Transverse colon (tissue), 4 donors: ENCODE measurements at regions of chr9 and their contacts with region 1.

Region 1: GRCh38 chr9:12719431-12719830 is 26.2 kb downstream of the TYRP1 start:
- DNase-seq: no peak
- H3K4me3 ChIP-seq: no peak overlapping the region
- H3K27ac ChIP-seq: no peak overlapping the region
- H3K4me1 ChIP-seq: no peaks in the 10 kb centered on the region
- H3K27me3 ChIP-seq: no peaks in the 10 kb centered on the region
- CTCF ChIP-seq: peak; percentile 42 to 57 (median 51)
- EP300 ChIP-seq: no peak
- POLR2A ChIP-seq: no peak

Region 2: DNA sequence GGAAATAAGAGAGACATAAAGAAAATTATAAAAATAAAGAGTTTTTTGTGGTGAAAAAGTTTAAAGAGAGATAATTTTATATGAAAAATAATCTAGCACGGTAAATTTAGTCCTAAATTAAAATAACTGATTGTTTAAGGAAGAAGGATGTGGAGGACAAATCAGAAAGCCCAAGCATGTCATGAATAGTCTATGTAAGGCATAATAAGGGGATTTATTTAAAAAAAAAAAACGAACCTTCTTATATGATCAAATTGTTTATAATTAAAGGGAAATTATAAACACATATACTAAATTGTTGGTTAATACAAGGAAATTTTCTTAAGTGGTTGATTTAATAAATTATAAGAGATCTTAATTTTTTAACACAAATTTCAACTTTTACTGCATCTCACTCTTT is 578.0 kb before region 1 on chr9:
- in situ Hi-C with region 1: no loop called
- intact Hi-C with region 1: no loop called
- DNase-seq: no peak
- H3K4me3 ChIP-seq: no peak overlapping the region
- H3K27ac ChIP-seq: no peak overlapping the region
- H3K4me1 ChIP-seq: no peaks in the 10 kb centered on the region
- H3K27me3 ChIP-seq: no peaks in the 10 kb centered on the region
- CTCF ChIP-seq: no peak
- EP300 ChIP-seq: no peak
- POLR2A ChIP-seq: no peak

Region 3: DNA sequence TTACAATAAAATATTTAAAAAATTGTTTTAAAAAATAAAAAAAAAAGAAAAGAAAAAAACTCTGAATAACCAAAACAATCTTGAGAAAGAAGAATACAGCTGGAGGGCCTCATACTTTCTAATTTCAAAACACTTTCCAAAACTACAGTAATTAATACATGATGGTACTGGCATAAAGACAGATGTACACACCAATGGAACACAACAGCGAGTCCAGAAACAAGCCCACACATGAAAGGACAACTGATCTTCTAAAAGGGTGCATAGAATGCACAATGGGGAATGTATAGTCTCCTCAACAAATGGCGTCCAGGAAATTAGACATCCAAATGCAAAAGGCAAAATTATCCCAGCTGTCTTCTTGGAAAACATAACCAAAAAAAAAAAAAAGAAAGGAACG is 155.0 kb after region 1 on chr9:
- in situ Hi-C with region 1: loop called in 2 of 4 experiments (anchors 5 to 25 kb)
- intact Hi-C with region 1: no loop called
- DNase-seq: no peak
- H3K4me3 ChIP-seq: no peak overlapping the region
- H3K27ac ChIP-seq: no peak overlapping the region
- H3K4me1 ChIP-seq: peaks cover 0 to 18% (median 1%) of the 10 kb centered on the region in 4 donors
- H3K27me3 ChIP-seq: no peaks in the 10 kb centered on the region
- CTCF ChIP-seq: no peak
- EP300 ChIP-seq: no peak
- POLR2A ChIP-seq: no peak

Region 4: DNA sequence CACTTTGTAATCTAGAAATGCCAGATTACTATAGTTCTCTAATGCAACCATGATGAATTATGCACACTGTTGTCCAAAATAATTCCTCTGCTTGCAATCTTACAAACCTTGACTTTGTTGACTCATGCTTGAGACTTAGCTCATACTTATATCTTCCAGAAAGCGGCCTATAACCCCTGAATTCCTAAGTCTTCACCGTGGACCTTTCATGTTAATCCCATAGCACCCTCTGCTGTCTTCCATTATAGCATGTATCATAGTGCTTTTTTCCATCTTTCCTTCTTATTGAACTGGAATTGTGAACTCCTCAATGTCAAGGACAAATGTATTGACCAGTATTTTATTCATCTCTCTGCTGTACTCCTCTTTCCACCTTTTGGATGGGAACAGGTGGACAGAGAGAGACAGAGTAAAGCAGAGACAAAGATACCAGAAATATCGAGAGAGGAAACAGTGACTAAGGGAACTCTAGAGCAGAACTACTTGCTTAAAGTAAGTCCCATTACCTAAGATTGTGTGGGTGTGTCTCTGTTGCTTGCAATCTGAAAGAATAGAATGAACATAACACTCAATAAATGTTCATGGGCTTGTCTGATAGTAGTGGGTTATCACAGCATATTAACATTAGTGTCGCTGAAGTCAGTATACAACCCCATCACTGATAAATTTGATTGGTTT is 165.4 kb after region 1 on chr9:
- in situ Hi-C with region 1: loop called in 3 of 4 experiments (anchors 5 to 25 kb)
- intact Hi-C with region 1: loop called (anchors 5 kb)
- DNase-seq: no peak
- H3K4me3 ChIP-seq: no peak overlapping the region
- H3K27ac ChIP-seq: peak overlapping the region in 1 of 4 donors; percentile 10
- H3K4me1 ChIP-seq: peaks cover 0 to 22% (median 13%) of the 10 kb centered on the region in 4 donors
- H3K27me3 ChIP-seq: no peaks in the 10 kb centered on the region
- CTCF ChIP-seq: peak; percentile 51 to 79 (median 60)
- EP300 ChIP-seq: no peak
- POLR2A ChIP-seq: no peak

Region 5: GRCh38 chr9:13088720-13089427 is 369.4 kb after region 1 on chr9:
- in situ Hi-C with region 1: loop called (anchors 10 to 25 kb)
- intact Hi-C with region 1: no loop called
- DNase-seq: peak; percentile 7
- H3K4me3 ChIP-seq: no peak overlapping the region
- H3K27ac ChIP-seq: no peak overlapping the region
- H3K4me1 ChIP-seq: peaks cover 0 to 3% (median 0%) of the 10 kb centered on the region in 4 donors
- H3K27me3 ChIP-seq: no peaks in the 10 kb centered on the region
- CTCF ChIP-seq: peak; percentile 57 to 78 (median 66)
- EP300 ChIP-seq: no peak
- POLR2A ChIP-seq: no peak

Region 6: DNA sequence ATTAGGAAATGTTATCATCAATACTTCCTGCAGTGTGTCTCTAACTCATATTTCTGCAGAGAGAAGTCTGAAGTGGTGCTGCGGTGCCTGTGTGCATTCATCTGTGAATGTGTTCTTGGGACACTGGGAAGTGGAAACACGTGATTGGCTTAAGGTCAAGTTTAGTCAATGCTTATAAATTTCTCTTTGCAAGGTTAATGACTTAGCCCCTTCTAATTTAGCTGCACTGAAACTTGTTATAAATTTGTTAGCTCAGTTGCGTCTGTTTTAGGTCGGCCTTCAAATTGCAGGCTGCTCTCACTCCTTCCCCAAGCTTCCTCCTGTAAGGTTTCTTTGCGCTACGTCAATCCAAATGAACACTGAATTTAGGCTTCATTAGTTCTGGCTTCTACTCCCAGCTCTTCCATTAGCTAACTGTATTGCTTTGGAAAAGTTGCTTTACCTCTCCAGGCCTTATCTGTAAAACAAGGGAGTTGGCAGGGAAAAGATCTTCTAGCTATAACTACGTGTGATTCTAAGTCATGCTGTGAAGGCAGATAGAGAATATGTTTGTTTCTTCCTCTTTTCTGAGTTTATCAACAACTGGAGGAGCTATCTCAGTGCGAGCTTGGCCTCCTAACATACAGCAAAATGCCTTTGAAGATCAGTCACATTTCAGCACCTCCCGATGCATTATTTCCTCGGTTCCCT is 1252.7 kb after region 1 on chr9:
- in situ Hi-C with region 1: no loop called
- intact Hi-C with region 1: no loop called
- DNase-seq: no peak
- H3K4me3 ChIP-seq: no peak overlapping the region
- H3K27ac ChIP-seq: no peak overlapping the region
- H3K4me1 ChIP-seq: peaks cover 0 to 4% (median 0%) of the 10 kb centered on the region in 4 donors
- H3K27me3 ChIP-seq: no peaks in the 10 kb centered on the region
- CTCF ChIP-seq: no peak
- EP300 ChIP-seq: no peak
- POLR2A ChIP-seq: no peak